ENCODE measurements at regions of chr22 and their contacts with region 1.

Region 1: DNA sequence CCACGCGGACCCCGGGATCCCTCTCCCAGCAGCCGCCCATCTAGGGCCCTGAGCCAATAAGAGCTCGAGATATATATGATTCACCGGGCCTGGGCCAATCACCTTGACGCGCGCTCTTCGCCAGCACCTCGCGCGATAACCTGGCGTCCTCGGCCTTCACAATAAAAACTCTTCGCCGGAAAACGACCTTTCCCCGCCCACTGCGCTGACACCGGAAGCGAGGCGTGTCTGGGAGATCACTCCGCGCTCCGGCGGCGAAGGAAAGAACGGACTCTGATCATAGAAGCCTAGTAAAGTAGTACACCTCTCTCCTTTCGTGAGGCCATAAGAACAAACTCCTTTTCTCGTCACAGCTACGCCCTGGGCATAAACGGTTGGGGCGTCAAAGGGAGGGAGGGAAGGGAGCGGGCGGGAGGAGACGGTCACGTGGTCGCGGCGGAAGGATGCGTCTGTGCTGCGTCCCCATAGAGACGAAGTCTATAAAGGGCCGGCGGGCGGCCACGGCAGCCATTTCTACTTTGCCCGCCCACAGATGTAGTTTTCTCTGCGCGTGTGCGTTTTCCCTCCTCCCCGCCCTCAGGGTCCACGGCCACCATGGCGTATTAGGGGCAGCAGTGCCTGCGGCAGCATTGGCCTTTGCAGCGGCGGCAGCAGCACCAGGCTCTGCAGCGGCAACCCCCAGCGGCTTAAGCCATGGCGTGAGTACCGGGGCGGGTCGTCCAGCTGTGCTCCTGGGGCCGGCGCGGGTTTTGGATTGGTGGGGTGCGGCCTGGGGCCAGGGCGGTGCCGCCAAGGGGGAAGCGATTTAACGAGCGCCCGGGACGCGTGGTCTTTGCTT is at the start of gene ATF4:
- DNase-seq: peak; percentile 98 to 99 (median 98)
- ATAC-seq: peak; percentile 82 to 92 (median 88)
- H3K4me3 ChIP-seq: peak within 1 kb of the TSS; percentile 71 to 100 (median 96)
- H3K27ac ChIP-seq: peak within 1 kb of the TSS; percentile 97 to 100 (median 100)
- H3K4me1 ChIP-seq: peaks cover 0 to 56% (median 50%) of the 10 kb centered on the region in 12 donors
- H3K27me3 ChIP-seq: no peaks in the 10 kb centered on the region
- CTCF ChIP-seq: no peak
- POLR2A ChIP-seq: peak; percentile 83 to 97
- total RNA-seq, gene ATF4: 117 to 322 (median 168) TPM

Region 2: GRCh38 chr22:38705235-38706100 is 814.8 kb before region 1 on chr22 and contains the start of gene GTPBP1:
- intact Hi-C with region 1: loop called in 1 of 10 experiments (anchors 5 kb)
- DNase-seq: peak; percentile 98 to 100 (median 99)
- ATAC-seq: peak; percentile 88 to 96 (median 94)
- H3K4me3 ChIP-seq: peak within 1 kb of the TSS; percentile 71 to 99 (median 84)
- H3K27ac ChIP-seq: peak within 1 kb of the TSS; percentile 73 to 99 (median 94)
- H3K4me1 ChIP-seq: peaks cover 0 to 53% (median 37%) of the 10 kb centered on the region in 12 donors
- H3K27me3 ChIP-seq: no peaks in the 10 kb centered on the region
- CTCF ChIP-seq: peak in 4 of 12 donors; percentile 15 to 40 (median 30)
- POLR2A ChIP-seq: peak; percentile 94 to 97
- total RNA-seq, gene GTPBP1: 23.7 to 45.3 (median 28.1) TPM

Region 3: GRCh38 chr22:39170825-39171622 is 349.2 kb before region 1 on chr22:
- intact Hi-C with region 1: loop called in 8 of 10 experiments (anchors 5 to 10 kb)
- DNase-seq: peak; percentile 81 to 93 (median 84)
- ATAC-seq: peak; percentile 76 to 87 (median 83)
- H3K4me3 ChIP-seq: peak overlapping the region in 4 of 12 donors; percentile 1 to 18 (median 10)
- H3K27ac ChIP-seq: peak overlapping the region in 3 of 12 donors; percentile 25 to 42 (median 40)
- H3K4me1 ChIP-seq: peaks cover 33 to 56% (median 47%) of the 10 kb centered on the region in 12 donors
- H3K27me3 ChIP-seq: no peaks in the 10 kb centered on the region
- CTCF ChIP-seq: peak; percentile 94 to 99 (median 96)
- POLR2A ChIP-seq: no peak

Region 4: GRCh38 chr22:39319270-39320022 is 200.8 kb before region 1 on chr22 and contains the start of gene RPL3:
- intact Hi-C with region 1: loop called in 7 of 10 experiments (anchors 5 to 10 kb)
- DNase-seq: peak; percentile 96 to 98 (median 97)
- ATAC-seq: peak; percentile 87 to 94 (median 90)
- H3K4me3 ChIP-seq: peak within 1 kb of the TSS; percentile 58 to 93 (median 78)
- H3K27ac ChIP-seq: peak within 1 kb of the TSS; percentile 81 to 100 (median 96)
- H3K4me1 ChIP-seq: peaks cover 22 to 50% (median 42%) of the 10 kb centered on the region in 12 donors
- H3K27me3 ChIP-seq: no peaks in the 10 kb centered on the region
- CTCF ChIP-seq: peak in 6 of 12 donors; percentile 9 to 39 (median 27)
- POLR2A ChIP-seq: peak in 1 of 2 donors; percentile 79
- total RNA-seq, gene RPL3: 237 to 911 (median 336) TPM

Region 5: DNA sequence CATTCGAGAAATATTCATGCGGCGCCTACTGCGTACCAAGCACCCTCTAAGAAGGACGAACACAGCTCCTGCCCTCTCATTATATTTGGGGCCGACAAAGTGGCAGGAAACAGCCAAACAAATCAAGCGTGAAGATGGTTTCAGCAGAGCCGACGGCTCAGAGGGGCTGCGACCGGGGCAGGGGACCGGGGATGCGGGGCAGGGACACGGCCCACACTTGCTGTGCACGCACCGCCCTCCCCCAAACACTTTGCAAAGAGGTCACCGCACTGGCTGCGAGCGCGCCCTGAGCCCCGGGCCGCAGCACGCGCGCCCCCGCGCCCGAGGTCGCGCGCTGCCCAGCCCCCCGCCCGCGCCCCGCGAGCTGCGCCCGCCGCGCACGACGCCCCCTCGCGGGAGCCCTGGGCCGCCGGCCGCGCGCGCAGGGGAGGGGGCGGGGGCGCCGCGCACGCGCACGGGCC is 170.7 kb before region 1 on chr22:
- intact Hi-C with region 1: loop called in 6 of 10 experiments (anchors 5 to 10 kb)
- DNase-seq: peak in 3 of 5 donors; percentile 50 to 59 (median 54)
- ATAC-seq: peak; percentile 38 to 69 (median 57)
- H3K4me3 ChIP-seq: peak overlapping the region; percentile 59 to 97 (median 74)
- H3K27ac ChIP-seq: peak overlapping the region in 11 of 12 donors; percentile 46 to 85 (median 69)
- H3K4me1 ChIP-seq: peaks cover 0 to 22% (median 10%) of the 10 kb centered on the region in 12 donors
- H3K27me3 ChIP-seq: peaks cover 0 to under 1% (median 0%) of the 10 kb centered on the region in 9 donors
- CTCF ChIP-seq: no peak
- POLR2A ChIP-seq: no peak

Region 6: DNA sequence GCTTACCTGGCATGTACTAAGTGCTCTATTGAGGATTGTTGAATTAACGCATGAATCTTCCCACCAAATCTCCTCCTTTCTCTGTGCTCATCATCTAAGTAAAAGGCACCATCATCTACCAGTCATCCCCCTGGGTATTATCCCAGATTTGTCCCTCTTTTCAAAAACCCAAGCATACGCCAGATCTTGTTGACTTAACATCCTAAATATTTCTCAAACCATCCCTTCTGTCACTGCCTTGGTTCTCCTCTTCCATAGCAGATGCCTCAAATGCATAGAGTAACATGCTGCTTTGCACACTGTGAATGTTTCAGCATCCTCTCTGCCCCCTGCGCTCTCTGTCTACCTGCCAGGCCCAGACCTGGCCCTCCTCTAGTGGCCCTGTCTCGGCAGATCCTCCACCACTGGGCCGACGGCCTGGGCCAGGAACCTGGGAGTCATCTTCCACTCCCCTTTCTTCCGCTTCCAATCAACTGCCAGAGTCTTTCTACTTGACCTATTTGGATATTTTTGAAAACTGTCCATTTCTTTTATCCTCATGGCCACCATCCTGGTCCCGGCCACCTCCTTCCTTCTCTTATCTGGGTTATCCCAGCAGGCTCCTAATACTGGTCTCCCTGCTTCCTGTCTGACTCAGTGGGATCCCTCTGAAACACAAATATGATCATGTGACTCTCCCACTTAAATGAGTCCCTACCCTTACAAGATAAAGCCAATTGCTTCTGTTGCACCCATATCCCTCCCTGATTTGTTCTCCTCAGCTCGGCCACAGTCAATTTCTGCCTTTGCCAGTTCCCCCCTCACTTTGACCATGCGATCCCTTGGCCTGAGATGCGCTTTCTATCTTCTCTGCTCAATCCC is 124.1 kb before region 1 on chr22:
- intact Hi-C with region 1: loop called in 4 of 10 experiments (anchors 5 to 10 kb)
- DNase-seq: peak in 1 of 5 donors; percentile 40
- ATAC-seq: no peak
- H3K4me3 ChIP-seq: no peak overlapping the region
- H3K27ac ChIP-seq: no peak overlapping the region
- H3K4me1 ChIP-seq: peaks cover 0 to 15% (median 10%) of the 10 kb centered on the region in 12 donors
- H3K27me3 ChIP-seq: no peaks in the 10 kb centered on the region
- CTCF ChIP-seq: no peak
- POLR2A ChIP-seq: no peak

Region 7: GRCh38 chr22:39462443-39463221 is 57.6 kb before region 1 on chr22:
- intact Hi-C with region 1: loop called in 3 of 10 experiments (anchors 5 kb)
- DNase-seq: peak; percentile 63 to 84 (median 75)
- ATAC-seq: peak; percentile 51 to 68 (median 59)
- H3K4me3 ChIP-seq: no peak overlapping the region
- H3K27ac ChIP-seq: peak overlapping the region; percentile 52 to 89 (median 72)
- H3K4me1 ChIP-seq: peaks cover 16 to 69% (median 37%) of the 10 kb centered on the region in 12 donors
- H3K27me3 ChIP-seq: peaks cover 0 to 12% (median 6%) of the 10 kb centered on the region in 9 donors
- CTCF ChIP-seq: peak in 11 of 12 donors; percentile 2 to 50 (median 33)
- POLR2A ChIP-seq: peak in 1 of 2 donors; percentile 16

Region 8: GRCh38 chr22:39559454-39560105 is 39.3 kb after region 1 on chr22:
- intact Hi-C with region 1: no loop called
- DNase-seq: no peak
- ATAC-seq: peak in 2 of 4 donors; percentile 25
- H3K4me3 ChIP-seq: no peak overlapping the region
- H3K27ac ChIP-seq: no peak overlapping the region
- H3K4me1 ChIP-seq: peaks cover 0 to 22% (median 0%) of the 10 kb centered on the region in 12 donors
- H3K27me3 ChIP-seq: peaks cover 16 to 71% (median 29%) of the 10 kb centered on the region in 9 donors
- CTCF ChIP-seq: peak in 9 of 12 donors; percentile 15 to 39 (median 30)
- POLR2A ChIP-seq: no peak

Measured in heart left ventricle (tissue), 16 donors.